Heart left ventricle (tissue), 16 donors: ENCODE measurements at regions of chr10 and their contacts with region 1.

Region 1: DNA sequence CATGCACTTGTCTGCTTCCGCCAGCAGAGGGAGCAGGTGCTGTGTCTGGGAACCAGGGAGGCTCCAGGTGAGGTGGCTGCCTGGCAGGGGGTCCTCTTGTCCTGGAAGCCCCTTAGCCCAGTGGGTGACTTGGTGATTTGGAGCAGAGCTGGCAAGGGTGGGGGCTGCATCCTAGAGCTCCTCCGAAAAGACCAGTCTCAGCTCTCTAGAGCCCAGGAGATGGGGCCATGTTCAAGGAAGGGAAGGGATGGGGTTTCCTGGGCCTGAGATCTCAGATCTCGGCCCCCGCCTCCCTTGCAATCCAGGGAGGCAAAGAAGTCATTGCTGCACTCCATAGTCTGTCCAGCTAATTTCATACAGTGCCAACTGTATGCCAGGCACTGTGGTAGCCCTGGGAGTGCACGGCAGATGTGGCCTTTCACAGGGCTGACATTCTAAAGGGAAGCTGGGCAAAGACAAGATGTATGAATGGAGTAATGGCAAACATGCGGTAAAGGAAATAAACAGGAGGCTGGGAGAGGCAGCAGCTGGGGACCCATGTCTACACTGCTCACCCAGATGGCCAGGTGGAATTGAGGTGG is 20.4 kb upstream of the SFRP5 start:
- DNase-seq: peak; percentile 50 to 81 (median 62)
- ATAC-seq: peak in 1 of 4 donors; percentile 56
- H3K4me3 ChIP-seq: no peak overlapping the region
- H3K27ac ChIP-seq: no peak overlapping the region
- H3K4me1 ChIP-seq: peaks cover 0 to 15% (median 5%) of the 10 kb centered on the region in 12 donors
- H3K27me3 ChIP-seq: peaks cover 0 to 6% (median 0%) of the 10 kb centered on the region in 9 donors
- CTCF ChIP-seq: peak; percentile 75 to 89 (median 84)
- POLR2A ChIP-seq: no peak

Region 2: DNA sequence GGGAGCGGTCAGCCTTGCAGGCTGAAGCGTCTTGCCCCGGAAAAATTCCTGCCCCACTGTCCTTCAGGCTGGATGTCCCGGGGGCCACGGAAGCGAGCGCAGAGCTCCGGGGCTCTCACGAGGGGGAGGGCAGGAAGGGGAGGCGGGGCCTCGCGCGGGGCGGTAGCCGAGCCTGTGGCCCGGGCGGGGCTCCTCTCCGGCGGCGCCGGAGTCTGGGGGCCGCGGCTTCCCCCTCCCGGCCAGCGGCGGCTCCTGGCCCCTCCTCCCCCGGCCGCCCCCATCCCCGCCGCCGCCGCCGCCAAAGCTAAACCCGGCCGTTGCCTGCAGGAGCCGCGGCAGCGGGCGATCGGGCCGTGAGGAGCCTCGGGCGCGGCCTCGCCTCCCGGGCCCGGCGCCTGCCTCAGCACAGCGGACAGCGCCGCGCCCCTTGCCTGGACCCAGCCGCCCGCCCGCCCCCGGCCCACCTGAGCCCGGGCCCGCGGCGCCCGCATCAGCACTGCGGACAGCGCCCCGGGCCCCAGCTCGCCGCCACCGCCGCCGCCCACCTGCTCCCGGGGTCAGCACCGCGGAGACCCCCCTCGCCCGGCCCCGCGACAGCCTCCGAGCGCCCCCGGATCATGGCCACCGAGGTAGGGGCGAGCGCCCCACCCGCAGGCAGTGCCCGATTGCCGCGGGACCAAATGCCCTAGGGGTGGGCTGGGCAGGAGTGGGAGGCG is 57.6 kb after region 1 on chr10 and contains the start of gene GOLGA7B:
- intact Hi-C with region 1: loop called in 1 of 10 experiments (anchors 5 kb)
- DNase-seq: peak in 1 of 5 donors; percentile 29
- ATAC-seq: peak in 3 of 4 donors; percentile 71 to 96 (median 87)
- H3K4me3 ChIP-seq: peak within 1 kb of the TSS; percentile 13 to 61 (median 48)
- H3K27ac ChIP-seq: no peak within 1 kb of the TSS
- H3K4me1 ChIP-seq: peaks cover 0 to 16% (median 2%) of the 10 kb centered on the region in 12 donors
- H3K27me3 ChIP-seq: peaks cover 0 to 44% (median 18%) of the 10 kb centered on the region in 9 donors
- CTCF ChIP-seq: no peak
- POLR2A ChIP-seq: no peak
- total RNA-seq, gene GOLGA7B: 0.06 to 1.1 (median 0.16) TPM in 8 of 9 donors, not detected in the other

Region 3: GRCh38 chr10:97869091-97870042 is 77.1 kb after region 1 on chr10:
- intact Hi-C with region 1: loop called (anchors 1 to 10 kb)
- DNase-seq: peak; percentile 79 to 89 (median 81)
- ATAC-seq: peak; percentile 92 to 98 (median 96)
- H3K4me3 ChIP-seq: no peak overlapping the region
- H3K27ac ChIP-seq: no peak overlapping the region
- H3K4me1 ChIP-seq: peaks cover 0 to 15% (median 6%) of the 10 kb centered on the region in 12 donors
- H3K27me3 ChIP-seq: peaks cover 0 to 13% (median 0%) of the 10 kb centered on the region in 9 donors
- CTCF ChIP-seq: peak; percentile 57 to 78 (median 69)
- POLR2A ChIP-seq: no peak

Region 4: GRCh38 chr10:98028168-98028770 is 236.0 kb after region 1 on chr10:
- intact Hi-C with region 1: loop called in 2 of 10 experiments (anchors 10 kb)
- DNase-seq: peak in 4 of 5 donors; percentile 44 to 49 (median 46)
- ATAC-seq: peak; percentile 38 to 64 (median 57)
- H3K4me3 ChIP-seq: no peak overlapping the region
- H3K27ac ChIP-seq: no peak overlapping the region
- H3K4me1 ChIP-seq: peaks cover 0 to 25% (median 12%) of the 10 kb centered on the region in 12 donors
- H3K27me3 ChIP-seq: peaks cover 11 to 69% (median 31%) of the 10 kb centered on the region in 9 donors
- CTCF ChIP-seq: peak; percentile 60 to 87 (median 75)
- POLR2A ChIP-seq: no peak

Region 5: GRCh38 chr10:98045785-98046389 is 253.7 kb after region 1 on chr10:
- intact Hi-C with region 1: loop called in 4 of 10 experiments (anchors 5 to 10 kb)
- DNase-seq: peak in 4 of 5 donors; percentile 45 to 57 (median 49)
- ATAC-seq: peak in 3 of 4 donors; percentile 40 to 65 (median 45)
- H3K4me3 ChIP-seq: no peak overlapping the region
- H3K27ac ChIP-seq: no peak overlapping the region
- H3K4me1 ChIP-seq: peaks cover 0 to 24% (median 5%) of the 10 kb centered on the region in 12 donors
- H3K27me3 ChIP-seq: peaks cover 0 to 12% (median 0%) of the 10 kb centered on the region in 9 donors
- CTCF ChIP-seq: peak; percentile 75 to 93 (median 84)
- POLR2A ChIP-seq: no peak